Sciatic nerve (tissue), 2 donors: ENCODE measurements at regions of chr3 and their contacts with region 1.

Region 1: DNA sequence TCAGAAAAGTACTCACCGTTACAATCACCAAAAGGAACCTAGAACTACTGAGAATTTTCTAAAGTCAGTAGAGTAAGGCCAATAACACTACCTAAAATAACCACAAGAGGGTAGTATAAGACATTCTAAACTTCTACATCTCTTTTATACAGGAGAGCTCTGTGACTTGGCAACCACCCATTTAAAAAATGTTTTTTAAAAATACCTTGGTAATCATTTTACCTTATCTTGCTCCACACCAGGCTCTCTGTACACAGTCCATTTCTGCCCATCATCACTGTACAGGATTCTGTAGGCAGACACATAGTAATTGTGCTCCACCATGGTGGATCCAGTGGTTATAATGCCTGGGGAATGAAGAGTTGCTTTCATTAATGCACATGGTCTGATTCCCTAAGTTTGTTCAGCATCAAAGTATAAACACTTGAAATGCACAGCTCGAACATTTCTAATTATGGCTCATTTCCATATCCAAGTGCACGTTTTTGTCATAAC is 54.5 kb downstream of the ST3GAL6 start:
- DNase-seq: no peak
- ATAC-seq: peak; percentile 87

Region 2: DNA sequence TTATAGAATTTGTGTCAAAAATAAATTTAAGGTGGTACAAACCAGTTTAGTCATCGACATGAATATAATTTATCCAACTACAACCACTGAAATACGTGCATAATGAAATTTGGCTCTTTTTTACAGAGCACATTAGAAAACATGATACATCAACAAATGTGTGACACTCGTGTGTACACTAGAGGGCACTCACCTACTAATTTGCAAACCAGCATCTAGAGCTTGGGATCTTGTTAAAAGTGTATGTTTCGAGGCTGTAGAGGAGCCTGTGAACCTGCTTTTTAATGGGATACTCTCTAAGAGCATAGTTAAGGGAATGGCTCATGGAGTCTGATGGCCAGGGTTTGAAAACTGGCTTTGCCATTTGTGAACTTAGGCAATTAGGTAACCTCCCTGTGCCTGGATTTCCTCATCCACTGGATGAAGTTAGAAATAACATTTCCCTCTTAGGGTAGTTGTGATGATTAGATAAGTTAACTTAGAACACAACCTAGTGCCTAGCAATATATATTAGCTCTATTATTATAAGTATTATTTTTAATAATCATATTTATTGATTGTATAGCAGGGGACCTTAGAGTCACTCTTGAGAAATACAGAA is 215.4 kb before region 1 on chr3:
- intact Hi-C with region 1: loop called (anchors 5 kb)
- DNase-seq: no peak
- ATAC-seq: peak; percentile 88

Region 3: DNA sequence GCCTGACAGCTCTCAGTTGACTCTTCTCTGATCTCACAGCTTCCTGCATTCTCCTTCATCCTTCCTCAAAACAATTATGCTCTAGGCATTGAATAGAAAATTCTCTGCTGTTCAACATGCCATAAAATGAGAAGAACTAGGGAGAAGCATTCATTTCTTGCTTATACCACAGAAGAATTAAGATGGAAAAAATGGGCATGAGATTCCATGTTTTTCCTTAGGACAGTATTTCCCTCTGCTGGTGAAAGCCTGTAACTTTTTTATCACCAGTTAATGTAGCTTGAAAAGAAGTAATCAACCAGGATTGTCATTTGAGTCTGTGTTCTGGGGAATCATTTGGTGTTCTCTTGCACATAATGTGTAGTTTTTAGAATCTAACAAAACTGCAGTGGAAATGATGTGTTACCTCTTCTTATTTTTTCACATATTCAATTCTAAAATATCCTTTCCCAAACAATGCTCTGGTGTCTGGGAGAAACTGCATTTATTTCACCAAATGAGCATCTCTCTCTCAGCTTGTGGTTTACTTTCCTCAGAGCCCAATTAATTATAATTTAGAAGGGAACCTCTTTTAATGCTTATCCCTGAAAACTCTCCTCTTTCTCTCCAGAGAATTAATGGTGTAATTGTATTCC is 176.7 kb after region 1 on chr3:
- intact Hi-C with region 1: loop called (anchors 10 kb)
- DNase-seq: no peak
- ATAC-seq: peak; percentile 68